Vagina (tissue), 2 donors: ENCODE measurements at regions of chr12 and their contacts with region 1.

Region 1: GRCh38 chr12:133037207-133038005 is at the start of gene ZNF84:
- DNase-seq: peak; percentile 98 to 99
- H3K4me3 ChIP-seq: peak within 1 kb of the TSS; percentile 63 to 79
- H3K27ac ChIP-seq: peak within 1 kb of the TSS; percentile 86
- H3K4me1 ChIP-seq: peaks cover 6% of the 10 kb centered on the region
- H3K27me3 ChIP-seq: no peaks in the 10 kb centered on the region
- CTCF ChIP-seq: peak in 1 of 3 experiments; percentile 18
- POLR2A ChIP-seq: peak in 1 of 2 donors; percentile 32
- total RNA-seq, gene ZNF84: 24.6 TPM

Region 2: DNA sequence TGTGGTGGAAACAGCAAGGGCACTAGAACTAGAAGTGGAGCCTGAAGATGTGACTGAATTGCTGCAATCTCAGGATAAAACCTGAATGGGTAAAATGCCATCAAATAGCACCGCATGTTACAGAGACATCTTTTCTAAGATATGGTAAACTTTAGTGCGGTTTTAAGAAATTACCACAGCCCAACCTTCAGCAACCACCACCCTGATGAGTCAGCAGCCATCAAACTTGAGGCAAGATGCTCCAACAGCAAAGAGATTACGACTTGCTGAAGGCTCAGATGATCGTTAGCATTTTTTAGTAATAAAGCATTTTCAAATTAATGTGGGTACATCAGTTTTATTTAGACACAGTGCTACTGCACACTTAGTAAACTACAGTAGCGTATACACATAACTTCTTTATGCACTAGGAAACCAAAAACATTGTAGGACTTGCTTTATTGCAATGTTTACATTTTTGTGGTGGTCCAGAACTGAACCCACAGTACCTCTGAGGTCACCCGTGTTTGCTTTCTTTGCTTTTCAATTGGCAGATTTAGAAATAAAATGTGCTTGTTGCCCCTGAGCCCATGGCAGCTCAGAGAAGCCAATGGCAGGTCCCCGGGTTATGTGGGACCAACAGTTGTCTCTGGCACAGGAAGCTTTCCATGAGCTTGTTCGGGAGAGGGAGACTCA is 224.6 kb before region 1 on chr12:
- intact Hi-C with region 1: no loop called
- DNase-seq: no peak
- H3K4me3 ChIP-seq: no peak overlapping the region
- H3K27ac ChIP-seq: no peak overlapping the region
- H3K4me1 ChIP-seq: no peaks in the 10 kb centered on the region
- H3K27me3 ChIP-seq: no peaks in the 10 kb centered on the region
- CTCF ChIP-seq: no peak
- POLR2A ChIP-seq: no peak

Region 3: GRCh38 chr12:132986001-132986912 is 51.1 kb before region 1 on chr12 and contains the start of gene ZNF26:
- intact Hi-C with region 1: loop called (anchors 5 kb)
- DNase-seq: peak in 1 of 2 donors; percentile 89
- H3K4me3 ChIP-seq: peak within 1 kb of the TSS; percentile 70 to 99
- H3K27ac ChIP-seq: peak within 1 kb of the TSS; percentile 53
- H3K4me1 ChIP-seq: peaks cover 12% of the 10 kb centered on the region
- H3K27me3 ChIP-seq: no peaks in the 10 kb centered on the region
- CTCF ChIP-seq: peak in 1 of 3 experiments; percentile 3
- POLR2A ChIP-seq: no peak
- total RNA-seq, gene ZNF26: 11.8 TPM